CD14-positive monocyte (primary cell): ENCODE measurements at regions of chr3 and their contacts with region 1.

Region 1: DNA sequence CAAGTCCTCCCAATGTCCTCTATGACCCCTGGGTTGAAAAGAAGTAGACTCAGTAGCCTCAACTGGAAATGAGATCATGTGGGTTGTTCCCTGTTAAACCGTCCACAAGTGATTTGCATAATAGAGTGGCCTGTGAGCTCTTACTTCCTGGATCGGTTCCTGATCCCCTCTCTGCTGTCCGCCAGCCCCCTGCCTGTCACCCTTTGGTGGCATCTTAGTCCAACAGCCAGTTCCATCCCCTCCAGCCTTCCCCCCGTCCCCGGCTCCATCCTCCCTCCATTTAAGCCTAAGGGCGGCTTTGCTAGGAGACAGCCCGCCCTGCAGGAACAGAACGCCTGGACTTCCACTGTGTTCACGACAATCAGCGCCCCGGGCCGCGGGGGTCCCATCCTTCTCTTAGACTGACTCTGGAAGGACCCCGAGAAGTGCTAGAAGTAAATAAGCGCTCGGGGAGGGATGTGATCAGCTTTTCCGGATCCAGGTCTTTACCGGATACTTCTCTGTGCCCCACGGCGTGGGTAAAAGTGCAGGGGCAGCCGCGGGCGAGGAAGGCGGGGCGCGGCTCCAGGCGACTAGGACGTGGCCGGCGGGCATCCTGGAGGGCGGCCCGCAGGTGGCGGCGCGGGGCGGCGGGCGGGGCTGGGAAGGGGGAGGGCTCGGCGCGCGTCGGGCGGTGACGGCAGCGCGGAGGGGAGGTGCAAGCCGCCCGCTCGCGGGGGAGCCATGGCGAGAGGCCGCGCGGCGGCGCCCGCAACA is 51.2 kb upstream of the ULK4 start:
- DNase-seq: peak; percentile 87 to 94 (median 94)
- H3K4me3 ChIP-seq: peak overlapping the region; percentile 92 to 96 (median 93)
- H3K4me3 Mint-ChIP-seq: peak overlapping the region; percentile 95 to 96
- H3K27ac ChIP-seq: peak overlapping the region; percentile 99
- H3K27ac Mint-ChIP-seq: peak overlapping the region; percentile 98 to 100 (median 99)
- H3K4me1 ChIP-seq: peaks cover 23 to 36% of the 10 kb centered on the region in 2 donors
- H3K4me1 Mint-ChIP-seq: peaks cover 40% of the 10 kb centered on the region
- H3K27me3 ChIP-seq: no peaks in the 10 kb centered on the region
- H3K27me3 Mint-ChIP-seq: peaks cover 0 to 5% (median 0%) of the 10 kb centered on the region in 3 donors
- CTCF ChIP-seq: no peak

Region 2: GRCh38 chr3:41961750-41962679 is 51.1 kb before region 1 on chr3 and contains the start of gene ULK4:
- intact Hi-C with region 1: loop called (anchors 2 to 5 kb)
- DNase-seq: peak; percentile 99 to 100 (median 99)
- H3K4me3 ChIP-seq: peak within 1 kb of the TSS; percentile 61 to 100 (median 82)
- H3K4me3 Mint-ChIP-seq: peak within 1 kb of the TSS; percentile 99
- H3K27ac ChIP-seq: peak within 1 kb of the TSS; percentile 47 to 87
- H3K27ac Mint-ChIP-seq: peak within 1 kb of the TSS; percentile 91 to 98 (median 96)
- H3K4me1 ChIP-seq: peaks cover 13 to 18% of the 10 kb centered on the region in 2 donors
- H3K4me1 Mint-ChIP-seq: peaks cover 17% of the 10 kb centered on the region
- H3K27me3 ChIP-seq: no peaks in the 10 kb centered on the region
- H3K27me3 Mint-ChIP-seq: no peaks in the 10 kb centered on the region
- CTCF ChIP-seq: no peak
- polyA plus RNA-seq, gene ULK4: 6.7 to 14.0 (median 11.8) TPM

Region 3: GRCh38 chr3:42067326-42067725 is 54.2 kb after region 1 on chr3:
- intact Hi-C with region 1: loop called in 1 of 2 experiments (anchors 10 kb)
- DNase-seq: peak; percentile 59 to 77 (median 67)
- H3K4me3 ChIP-seq: peak overlapping the region in 1 of 3 experiments; percentile 31
- H3K4me3 Mint-ChIP-seq: peak overlapping the region in 1 of 2 donors; percentile 75
- H3K27ac ChIP-seq: peak overlapping the region; percentile 74 to 91
- H3K27ac Mint-ChIP-seq: peak overlapping the region; percentile 93 to 98 (median 96)
- H3K4me1 ChIP-seq: peaks cover 51 to 52% of the 10 kb centered on the region in 2 donors
- H3K4me1 Mint-ChIP-seq: peaks cover 61% of the 10 kb centered on the region
- H3K27me3 ChIP-seq: no peaks in the 10 kb centered on the region
- H3K27me3 Mint-ChIP-seq: peaks cover 0 to 2% (median 0%) of the 10 kb centered on the region in 3 donors
- CTCF ChIP-seq: no peak

Region 4: DNA sequence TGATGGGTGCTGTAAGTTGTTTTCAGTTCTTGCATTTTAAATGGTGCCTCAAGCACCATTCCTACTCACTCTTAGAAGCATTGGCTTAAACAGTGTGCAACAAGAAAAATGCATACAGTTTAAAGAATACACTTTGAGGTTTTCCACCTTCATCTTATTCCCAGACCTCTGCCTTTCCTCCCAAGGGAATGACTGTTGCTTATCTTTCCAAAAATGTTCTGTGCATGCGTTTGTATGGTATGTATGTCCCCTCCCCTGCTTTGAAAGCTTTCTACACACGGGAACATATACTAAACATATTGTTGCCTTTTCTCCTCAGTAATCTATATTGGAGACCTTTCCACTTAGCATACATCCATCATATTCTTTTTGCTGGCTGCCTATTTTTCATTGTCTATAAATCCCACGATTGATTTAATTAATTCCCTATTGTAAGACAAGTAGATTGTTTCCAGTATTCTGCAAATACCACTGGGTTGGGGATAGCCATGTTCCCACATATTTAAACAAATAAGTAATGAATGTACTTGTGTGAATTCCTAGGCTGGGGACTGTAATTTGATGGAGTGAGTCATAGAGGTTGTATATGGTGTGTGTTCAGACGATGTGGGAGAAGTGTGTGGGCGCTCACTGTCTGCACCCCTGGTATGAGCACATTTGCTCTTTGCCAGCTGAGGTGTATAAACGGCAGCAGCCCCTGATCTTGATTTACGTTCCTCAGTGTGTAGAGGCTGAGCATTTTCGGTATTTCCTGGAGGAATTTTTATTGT is 83.9 kb after region 1 on chr3:
- intact Hi-C with region 1: loop called (anchors 5 kb)
- DNase-seq: no peak
- H3K4me3 ChIP-seq: no peak overlapping the region
- H3K4me3 Mint-ChIP-seq: no peak overlapping the region
- H3K27ac ChIP-seq: no peak overlapping the region
- H3K27ac Mint-ChIP-seq: no peak overlapping the region
- H3K4me1 ChIP-seq: peaks cover 13 to 14% of the 10 kb centered on the region in 2 donors
- H3K4me1 Mint-ChIP-seq: peaks cover 18% of the 10 kb centered on the region
- H3K27me3 ChIP-seq: no peaks in the 10 kb centered on the region
- H3K27me3 Mint-ChIP-seq: peaks cover 0 to 4% (median 4%) of the 10 kb centered on the region in 3 donors
- CTCF ChIP-seq: no peak

Region 5: GRCh38 chr3:42195879-42196330 is 182.8 kb after region 1 on chr3:
- intact Hi-C with region 1: no loop called
- DNase-seq: no peak
- H3K4me3 ChIP-seq: no peak overlapping the region
- H3K4me3 Mint-ChIP-seq: no peak overlapping the region
- H3K27ac ChIP-seq: no peak overlapping the region
- H3K27ac Mint-ChIP-seq: peak overlapping the region in 2 of 7 donors; percentile 64 to 68
- H3K4me1 ChIP-seq: peaks cover 28 to 31% of the 10 kb centered on the region in 2 donors
- H3K4me1 Mint-ChIP-seq: peaks cover 30% of the 10 kb centered on the region
- H3K27me3 ChIP-seq: no peaks in the 10 kb centered on the region
- H3K27me3 Mint-ChIP-seq: no peaks in the 10 kb centered on the region
- CTCF ChIP-seq: no peak